Pancreas (tissue), 10 donors: ENCODE measurements at regions of chr2 and their contacts with region 1.

Region 1: GRCh38 chr2:232521959-232522622 is 1.9 kb downstream of the PRSS56 start:
- DNase-seq: peak in 4 of 6 donors; percentile 62 to 93 (median 78)
- ATAC-seq: peak; percentile 61 to 73 (median 69)
- H3K4me3 ChIP-seq: peak overlapping the region in 2 of 4 donors; percentile 22 to 31
- H3K27ac ChIP-seq: no peak overlapping the region
- H3K4me1 ChIP-seq: peaks cover 0 to 22% (median 14%) of the 10 kb centered on the region in 3 donors
- H3K27me3 ChIP-seq: peaks cover 0 to 17% (median 8%) of the 10 kb centered on the region in 4 donors
- CTCF ChIP-seq: peak; percentile 90 to 96 (median 93)

Region 2: GRCh38 chr2:232444409-232445148 is 77.5 kb before region 1 on chr2:
- intact Hi-C with region 1: loop called in 1 of 3 experiments (anchors 2 kb)
- DNase-seq: peak in 4 of 6 donors; percentile 48 to 73 (median 59)
- ATAC-seq: peak; percentile 38 to 53 (median 45)
- H3K4me3 ChIP-seq: no peak overlapping the region
- H3K27ac ChIP-seq: no peak overlapping the region
- H3K4me1 ChIP-seq: no peaks in the 10 kb centered on the region
- H3K27me3 ChIP-seq: no peaks in the 10 kb centered on the region
- CTCF ChIP-seq: peak; percentile 22 to 39 (median 35)

Region 3: GRCh38 chr2:232568161-232568560 is 46.1 kb after region 1 on chr2:
- intact Hi-C with region 1: no loop called
- DNase-seq: no peak
- ATAC-seq: peak in 1 of 4 donors; percentile 28
- H3K4me3 ChIP-seq: no peak overlapping the region
- H3K27ac ChIP-seq: no peak overlapping the region
- H3K4me1 ChIP-seq: peaks cover 0 to 5% (median 1%) of the 10 kb centered on the region in 3 donors
- H3K27me3 ChIP-seq: no peaks in the 10 kb centered on the region
- CTCF ChIP-seq: no peak